ENCODE measurements at regions of chr1 and their contacts with region 1.

Region 1: GRCh38 chr1:87292684-87293493 is 35.8 kb upstream of the LMO4 start:
- DNase-seq: peak; percentile 60
- ATAC-seq: peak; percentile 59 to 74

Region 2: GRCh38 chr1:87131809-87132283 is 161.0 kb before region 1 on chr1:
- intact Hi-C with region 1: loop called in 1 of 2 experiments (anchors 5 kb)
- DNase-seq: peak; percentile 85
- ATAC-seq: peak; percentile 90

Region 3: GRCh38 chr1:87953732-87954344 is 660.9 kb after region 1 on chr1:
- intact Hi-C with region 1: loop called in 1 of 2 experiments (anchors 10 kb)
- DNase-seq: peak; percentile 65
- ATAC-seq: peak; percentile 67 to 82

Region 4: DNA sequence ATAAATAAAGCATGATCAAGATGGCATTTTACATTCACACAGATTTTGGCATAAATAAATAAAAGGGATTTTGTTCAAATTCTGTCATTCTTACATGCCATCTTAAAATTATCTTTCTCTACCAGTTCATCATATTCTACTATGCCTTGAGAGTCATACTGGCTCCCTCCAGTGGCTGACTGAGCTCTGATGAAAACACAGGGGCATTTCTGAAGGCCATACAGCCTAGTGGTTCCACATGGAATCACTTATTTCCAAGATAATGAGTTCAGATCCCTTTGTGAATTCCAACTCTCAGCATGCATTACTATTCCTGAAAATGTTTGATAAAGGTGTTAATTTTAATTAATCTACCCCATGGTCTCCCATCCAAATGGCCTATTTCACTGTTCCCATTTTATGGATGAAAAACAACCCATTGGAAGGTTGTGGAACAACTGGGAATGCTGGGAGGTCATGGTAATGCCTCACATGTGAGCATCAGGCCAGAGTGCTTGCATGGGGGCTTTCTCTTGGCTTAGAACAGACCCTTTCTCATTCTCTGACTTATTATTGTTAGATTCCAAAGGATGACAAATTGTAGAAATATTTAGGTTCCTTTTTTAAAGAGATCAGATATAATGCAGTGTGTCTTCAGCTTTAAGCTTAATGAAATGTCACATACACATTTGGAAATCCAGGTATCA is 768.7 kb after region 1 on chr1:
- intact Hi-C with region 1: loop called (anchors 5 to 10 kb)
- DNase-seq: peak; percentile 61
- ATAC-seq: peak; percentile 81 to 89

Region 5: GRCh38 chr1:88302843-88303486 is 1010.1 kb after region 1 on chr1:
- intact Hi-C with region 1: loop called in 1 of 2 experiments (anchors 10 kb)
- DNase-seq: no peak
- ATAC-seq: peak in 1 of 2 donors; percentile 63

Measured in left cardiac atrium (tissue), 4 donors.